ENCODE measurements at regions of chr2 and their contacts with region 1.

Region 1: GRCh38 chr2:231227309-231228162 is 29.1 kb downstream of the ARMC9 start:
- DNase-seq: peak; percentile 75 to 91 (median 79)
- H3K4me3 ChIP-seq: no peak overlapping the region
- H3K27ac ChIP-seq: peak overlapping the region in 3 of 5 donors; percentile 49 to 65 (median 63)
- H3K4me1 ChIP-seq: peaks cover 0 to 3% of the 10 kb centered on the region in 2 donors
- H3K27me3 ChIP-seq: no peaks in the 10 kb centered on the region
- CTCF ChIP-seq: peak; percentile 57 to 95 (median 87)
- POLR2A ChIP-seq: no peak

Region 2: GRCh38 chr2:231200805-231201474 is 26.6 kb before region 1 on chr2:
- intact Hi-C with region 1: no loop called
- DNase-seq: peak in 2 of 7 donors; percentile 26 to 53
- H3K4me3 ChIP-seq: no peak overlapping the region
- H3K27ac ChIP-seq: no peak overlapping the region
- H3K4me1 ChIP-seq: peaks cover 6 to 28% of the 10 kb centered on the region in 2 donors
- H3K27me3 ChIP-seq: no peaks in the 10 kb centered on the region
- CTCF ChIP-seq: no peak
- POLR2A ChIP-seq: no peak

Region 3: DNA sequence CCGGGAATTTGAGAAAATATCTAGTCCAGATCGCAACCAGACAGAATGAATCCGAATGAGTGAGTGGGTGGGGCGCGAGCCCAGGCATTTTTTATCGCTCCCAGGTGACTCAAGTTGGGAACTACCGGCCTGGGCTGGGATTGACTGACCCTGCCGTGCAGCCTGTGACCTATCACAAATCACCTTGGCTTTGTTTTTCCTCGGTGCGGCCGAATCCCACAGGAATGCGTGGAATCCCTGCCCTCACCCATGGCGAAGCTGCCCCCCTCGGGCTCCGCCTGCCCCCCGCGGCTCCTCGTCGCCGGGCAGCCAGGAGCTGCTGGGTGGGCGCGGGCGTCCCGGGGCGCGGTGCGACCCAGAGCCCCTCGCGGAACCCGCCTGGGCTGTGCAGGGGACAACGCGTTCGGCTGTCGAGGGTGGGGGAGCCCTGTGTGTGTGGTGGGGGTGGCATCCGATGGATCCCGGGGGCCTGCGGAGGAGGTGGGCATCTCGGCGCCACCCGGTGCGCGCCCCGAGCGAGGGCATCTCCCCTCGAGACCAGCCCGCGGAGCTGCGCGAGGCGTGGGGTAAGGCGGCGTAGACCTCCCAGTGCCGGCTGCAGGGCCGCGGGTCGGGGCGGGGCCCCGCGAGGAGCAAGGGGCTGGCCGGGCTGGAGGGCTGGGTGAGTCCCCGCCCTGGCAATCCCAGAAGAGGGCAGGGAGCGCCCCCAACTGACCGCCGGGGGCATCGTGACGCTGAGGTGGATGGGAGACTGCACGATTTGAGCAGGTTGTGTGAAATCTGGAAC is 184.5 kb after region 1 on chr2:
- intact Hi-C with region 1: loop called (anchors 5 kb)
- DNase-seq: peak; percentile 89 to 96 (median 93)
- H3K4me3 ChIP-seq: peak overlapping the region in 3 of 4 donors; percentile 39 to 79 (median 44)
- H3K27ac ChIP-seq: peak overlapping the region in 4 of 5 donors; percentile 46 to 92 (median 74)
- H3K4me1 ChIP-seq: peaks cover 6 to 17% of the 10 kb centered on the region in 2 donors
- H3K27me3 ChIP-seq: no peaks in the 10 kb centered on the region
- CTCF ChIP-seq: peak; percentile 81 to 92 (median 85)
- POLR2A ChIP-seq: no peak

Region 4: DNA sequence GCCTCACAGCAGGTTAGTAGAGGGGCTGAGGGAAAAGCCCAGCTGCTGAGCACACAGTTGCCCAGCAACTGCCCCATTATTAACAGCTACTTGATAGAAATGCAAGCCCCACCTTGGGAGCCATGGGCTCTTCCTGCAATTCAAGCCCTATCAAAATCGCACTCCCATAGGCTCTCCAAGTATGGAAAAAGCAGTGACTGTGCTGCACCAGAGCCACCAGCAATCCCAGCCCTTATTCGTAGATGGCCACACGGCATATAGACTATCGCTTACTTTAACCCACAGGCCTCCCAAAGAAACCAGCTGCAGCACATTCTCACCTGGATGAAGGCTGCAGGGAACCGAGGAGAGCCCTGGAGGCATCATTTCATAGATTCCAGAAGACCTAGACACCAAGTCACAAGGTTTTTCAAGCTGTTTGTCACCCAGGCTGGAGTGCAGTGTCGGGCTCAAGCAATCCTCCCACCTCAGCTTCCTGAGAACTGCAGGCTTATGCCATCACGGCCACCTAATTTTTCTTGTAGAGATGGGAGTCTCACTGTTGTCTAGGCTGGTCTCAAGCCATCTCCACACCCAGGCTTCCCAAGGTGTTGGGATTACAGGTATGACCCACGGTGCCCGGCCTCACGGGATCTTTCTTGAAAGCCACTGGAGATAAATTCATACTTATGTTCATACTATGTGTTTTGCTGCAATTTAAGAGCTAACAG is 225.4 kb after region 1 on chr2:
- intact Hi-C with region 1: loop called in 1 of 2 experiments (anchors 5 kb)
- DNase-seq: peak in 1 of 7 donors; percentile 54
- H3K4me3 ChIP-seq: no peak overlapping the region
- H3K27ac ChIP-seq: peak overlapping the region in 2 of 5 donors; percentile 34 to 63
- H3K4me1 ChIP-seq: no peaks in the 10 kb centered on the region
- H3K27me3 ChIP-seq: no peaks in the 10 kb centered on the region
- CTCF ChIP-seq: no peak
- POLR2A ChIP-seq: no peak